Natural killer cell (primary cell): ENCODE measurements at regions of chr14 and their contacts with region 1.

Region 1: DNA sequence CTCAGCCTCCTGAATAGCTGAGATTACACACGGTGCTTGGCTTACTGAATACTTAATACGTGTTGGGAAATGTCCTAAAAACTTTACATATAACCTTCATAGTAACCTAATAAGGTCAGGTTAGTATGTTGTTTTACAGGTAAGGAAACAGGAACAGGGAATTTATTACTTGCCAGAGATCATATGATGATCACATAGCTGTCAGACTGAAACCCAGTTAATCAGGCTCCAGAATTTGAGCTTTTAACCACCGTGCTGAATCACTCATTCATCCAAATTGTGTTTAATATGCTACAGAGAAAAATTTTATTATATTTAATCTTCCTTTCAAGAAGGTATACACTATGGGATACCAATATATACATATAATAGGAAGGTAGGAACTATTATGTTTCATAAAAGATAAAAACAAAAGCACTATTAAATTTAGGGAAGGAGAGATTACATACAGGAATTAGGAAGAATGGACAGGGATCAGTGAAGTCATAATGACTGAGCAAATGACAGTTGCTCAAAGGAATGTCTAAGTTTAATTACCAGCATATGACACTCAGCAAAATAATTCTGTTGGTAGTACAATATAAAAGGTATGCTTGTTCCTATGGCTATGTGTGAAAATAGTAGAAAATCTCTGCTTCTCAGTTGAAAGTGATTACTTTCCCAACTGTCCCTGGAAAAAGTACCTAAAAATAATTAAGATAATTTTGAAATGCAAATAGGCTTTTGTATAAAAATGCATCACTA is 59.3 kb downstream of the HEATR5A start:
- DNase-seq: no peak
- ATAC-seq: no peak
- H3K4me3 ChIP-seq: no peak overlapping the region
- H3K4me3 Mint-ChIP-seq: no peak overlapping the region
- H3K27ac ChIP-seq: no peak overlapping the region
- H3K27ac Mint-ChIP-seq: no peak overlapping the region
- H3K4me1 ChIP-seq: peaks cover 2% of the 10 kb centered on the region
- H3K4me1 Mint-ChIP-seq: peaks cover 0 to 1% of the 10 kb centered on the region in 2 donors
- H3K27me3 ChIP-seq: no peaks in the 10 kb centered on the region
- H3K27me3 Mint-ChIP-seq: no peaks in the 10 kb centered on the region
- CTCF ChIP-seq: no peak

Region 2: DNA sequence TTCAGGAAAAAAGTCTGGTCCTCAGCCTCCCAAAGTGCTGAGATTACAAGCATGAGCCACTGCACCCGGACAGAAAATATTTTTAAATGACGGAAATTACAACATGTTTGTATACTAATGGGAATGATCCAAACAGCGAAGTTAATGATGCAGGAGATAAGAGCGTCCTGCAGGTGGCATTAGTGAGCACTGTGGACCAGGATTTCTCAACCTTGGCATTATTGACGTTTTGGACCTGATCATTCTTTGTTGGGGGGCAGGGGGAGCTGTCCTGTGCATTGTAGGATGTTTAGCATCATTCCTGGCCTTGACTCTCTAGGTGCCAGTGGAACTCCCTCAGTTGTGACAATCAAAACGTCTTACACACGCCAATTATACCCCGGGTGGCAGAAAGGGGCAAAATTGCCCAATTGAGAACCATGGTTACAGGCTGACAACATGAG is 704.9 kb before region 1 on chr14:
- intact Hi-C with region 1: loop called (anchors 1 kb)
- DNase-seq: peak in 1 of 2 donors; percentile 70
- ATAC-seq: peak; percentile 65 to 76 (median 72)
- H3K4me3 ChIP-seq: no peak overlapping the region
- H3K4me3 Mint-ChIP-seq: no peak overlapping the region
- H3K27ac ChIP-seq: no peak overlapping the region
- H3K27ac Mint-ChIP-seq: no peak overlapping the region
- H3K4me1 ChIP-seq: no peaks in the 10 kb centered on the region
- H3K4me1 Mint-ChIP-seq: peaks cover 0 to 5% of the 10 kb centered on the region in 2 donors
- H3K27me3 ChIP-seq: no peaks in the 10 kb centered on the region
- H3K27me3 Mint-ChIP-seq: no peaks in the 10 kb centered on the region
- CTCF ChIP-seq: peak; percentile 73

Region 3: DNA sequence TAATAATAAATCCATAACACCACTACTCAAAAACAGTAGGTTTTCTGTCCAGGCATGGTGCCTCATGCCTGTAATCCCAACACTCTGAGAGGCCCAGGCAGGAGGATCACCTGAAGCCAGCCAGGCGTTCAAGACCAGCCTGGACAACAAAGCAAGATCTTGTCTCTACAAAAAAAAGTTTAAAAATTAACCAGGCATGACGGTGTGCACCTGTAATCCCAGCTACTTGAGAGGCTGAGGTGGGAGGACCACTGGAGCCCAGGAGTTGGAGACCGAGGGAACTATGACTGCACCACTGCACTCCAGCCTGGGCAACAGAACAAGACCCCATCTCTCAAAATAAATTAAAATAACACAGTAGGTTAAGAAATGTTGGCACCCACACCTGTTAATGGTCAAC is 380.1 kb before region 1 on chr14:
- intact Hi-C with region 1: loop called (anchors 1 kb)
- DNase-seq: no peak
- ATAC-seq: no peak
- H3K4me3 ChIP-seq: no peak overlapping the region
- H3K4me3 Mint-ChIP-seq: no peak overlapping the region
- H3K27ac ChIP-seq: no peak overlapping the region
- H3K27ac Mint-ChIP-seq: peak overlapping the region in 1 of 2 donors; percentile 35
- H3K4me1 ChIP-seq: no peaks in the 10 kb centered on the region
- H3K4me1 Mint-ChIP-seq: peaks cover 7 to 19% of the 10 kb centered on the region in 2 donors
- H3K27me3 ChIP-seq: no peaks in the 10 kb centered on the region
- H3K27me3 Mint-ChIP-seq: no peaks in the 10 kb centered on the region
- CTCF ChIP-seq: no peak

Region 4: DNA sequence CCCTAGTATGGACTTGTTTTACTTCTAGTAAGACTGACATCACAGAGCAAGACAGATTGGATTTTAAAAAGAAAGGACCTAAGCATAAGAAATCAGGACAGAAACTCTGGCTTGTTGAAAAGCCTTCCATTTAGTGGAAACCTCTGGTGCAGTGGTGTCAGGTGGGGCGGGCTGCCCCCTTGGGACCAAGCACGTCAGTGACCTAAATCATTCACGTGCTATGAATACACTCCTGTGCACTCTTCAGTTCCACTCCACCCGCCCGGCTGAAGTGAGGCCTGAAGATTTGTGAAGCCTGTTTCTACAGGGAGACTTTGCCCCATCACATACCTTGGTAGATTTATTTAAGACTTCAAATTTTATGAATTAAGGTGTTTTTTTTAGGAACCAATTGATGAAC is 276.7 kb before region 1 on chr14:
- intact Hi-C with region 1: loop called (anchors 5 kb)
- DNase-seq: no peak
- ATAC-seq: no peak
- H3K4me3 ChIP-seq: no peak overlapping the region
- H3K4me3 Mint-ChIP-seq: no peak overlapping the region
- H3K27ac ChIP-seq: no peak overlapping the region
- H3K27ac Mint-ChIP-seq: no peak overlapping the region
- H3K4me1 ChIP-seq: no peaks in the 10 kb centered on the region
- H3K4me1 Mint-ChIP-seq: no peaks in the 10 kb centered on the region
- H3K27me3 ChIP-seq: no peaks in the 10 kb centered on the region
- H3K27me3 Mint-ChIP-seq: no peaks in the 10 kb centered on the region
- CTCF ChIP-seq: no peak

Region 5: DNA sequence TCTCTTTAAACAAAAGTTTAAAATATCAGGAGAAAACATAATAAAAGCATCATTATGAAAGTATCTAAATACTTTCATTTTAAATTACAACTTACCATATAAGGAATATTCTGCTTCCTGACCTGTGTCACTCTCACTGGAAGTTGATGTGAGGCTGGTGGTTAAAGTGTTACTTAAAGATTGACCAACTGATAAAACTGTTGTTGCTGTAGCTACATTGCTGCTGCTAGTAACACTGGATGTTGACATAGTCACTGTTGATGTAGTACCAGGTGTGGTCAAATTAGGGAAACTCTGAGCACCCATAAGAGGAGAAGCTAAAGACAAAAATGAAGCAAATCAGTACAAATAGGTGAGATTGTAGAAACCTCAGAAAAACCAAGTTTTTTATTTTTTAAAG is 233.4 kb before region 1 on chr14:
- intact Hi-C with region 1: loop called (anchors 2 kb)
- DNase-seq: peak in 1 of 2 donors; percentile 88
- ATAC-seq: peak; percentile 90 to 96 (median 93)
- H3K4me3 ChIP-seq: no peak overlapping the region
- H3K4me3 Mint-ChIP-seq: peak overlapping the region; percentile 66
- H3K27ac ChIP-seq: peak overlapping the region; percentile 74
- H3K27ac Mint-ChIP-seq: peak overlapping the region; percentile 79 to 86
- H3K4me1 ChIP-seq: peaks cover 31% of the 10 kb centered on the region
- H3K4me1 Mint-ChIP-seq: peaks cover 29 to 31% of the 10 kb centered on the region in 2 donors
- H3K27me3 ChIP-seq: no peaks in the 10 kb centered on the region
- H3K27me3 Mint-ChIP-seq: peaks cover 0 to 2% of the 10 kb centered on the region in 2 donors
- CTCF ChIP-seq: no peak

Region 6: DNA sequence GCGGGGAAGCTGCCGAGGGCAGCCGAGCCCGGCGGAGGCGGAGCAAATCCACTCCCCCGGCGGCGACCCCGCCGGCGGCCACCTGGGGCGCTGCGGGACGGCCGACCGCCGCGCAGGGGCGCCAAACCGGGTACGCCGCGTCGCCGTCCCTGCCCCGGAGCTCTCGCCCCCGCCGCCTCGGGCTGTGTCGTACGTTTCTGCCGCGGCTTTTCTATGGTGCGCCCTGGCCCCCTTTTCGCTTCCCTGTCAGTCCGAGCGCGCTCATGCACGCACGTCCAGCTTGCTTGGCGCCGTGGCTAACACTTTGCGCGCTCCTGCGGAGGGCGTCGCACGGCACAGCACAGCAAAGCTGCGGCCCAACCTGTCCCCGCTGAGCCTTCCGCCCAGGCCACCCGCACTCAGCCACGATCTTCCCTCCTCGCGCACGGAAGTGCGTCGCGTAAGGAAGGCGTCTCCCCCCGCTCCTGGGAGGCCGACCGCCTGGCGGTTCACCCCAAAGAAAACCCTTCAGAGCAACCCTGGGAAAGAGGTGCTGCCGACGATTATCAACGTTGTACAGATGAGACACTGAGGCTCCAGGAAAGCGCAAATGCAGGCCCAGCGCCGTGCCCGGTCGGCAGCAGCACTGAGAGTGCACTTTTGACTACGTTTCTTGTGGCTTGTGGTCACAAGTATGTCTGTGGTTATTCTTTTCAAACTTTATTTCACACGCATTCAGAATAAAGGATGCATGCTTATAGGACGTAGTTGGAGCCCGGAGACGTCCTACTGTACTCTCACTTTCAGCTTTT is 153.1 kb before region 1 on chr14 and contains the start of gene HECTD1:
- intact Hi-C with region 1: loop called (anchors 5 kb)
- DNase-seq: peak; percentile 86 to 95
- ATAC-seq: peak; percentile 74 to 85 (median 76)
- H3K4me3 ChIP-seq: peak within 1 kb of the TSS; percentile 90
- H3K4me3 Mint-ChIP-seq: peak within 1 kb of the TSS; percentile 94
- H3K27ac ChIP-seq: peak within 1 kb of the TSS; percentile 100
- H3K27ac Mint-ChIP-seq: peak within 1 kb of the TSS; percentile 99
- H3K4me1 ChIP-seq: peaks cover 26% of the 10 kb centered on the region
- H3K4me1 Mint-ChIP-seq: peaks cover 41 to 53% of the 10 kb centered on the region in 2 donors
- H3K27me3 ChIP-seq: no peaks in the 10 kb centered on the region
- H3K27me3 Mint-ChIP-seq: no peaks in the 10 kb centered on the region
- CTCF ChIP-seq: peak; percentile 81
- total RNA-seq, gene HECTD1: 162 to 202 (median 179) TPM

Region 7: GRCh38 chr14:31479027-31479426 is 117.9 kb after region 1 on chr14:
- intact Hi-C with region 1: no loop called
- DNase-seq: no peak
- ATAC-seq: no peak
- H3K4me3 ChIP-seq: no peak overlapping the region
- H3K4me3 Mint-ChIP-seq: no peak overlapping the region
- H3K27ac ChIP-seq: no peak overlapping the region
- H3K27ac Mint-ChIP-seq: no peak overlapping the region
- H3K4me1 ChIP-seq: no peaks in the 10 kb centered on the region
- H3K4me1 Mint-ChIP-seq: no peaks in the 10 kb centered on the region
- H3K27me3 ChIP-seq: peaks cover 2% of the 10 kb centered on the region
- H3K27me3 Mint-ChIP-seq: peaks cover 10 to 35% of the 10 kb centered on the region in 2 donors
- CTCF ChIP-seq: no peak